ENCODE measurements at regions of chr11 and their contacts with region 1.

Region 1: GRCh38 chr11:19903620-19904069 is 191.0 kb downstream of the NAV2 start:
- DNase-seq: peak; percentile 78 to 86
- H3K4me3 ChIP-seq: no peak overlapping the region
- H3K4me3 Mint-ChIP-seq: no peak overlapping the region
- H3K27ac Mint-ChIP-seq: no peak overlapping the region
- H3K4me1 ChIP-seq: peaks cover 13% of the 10 kb centered on the region; the same call in 1 of the 2 replicates
- H3K4me1 Mint-ChIP-seq: peaks cover 10% of the 10 kb centered on the region
- H3K27me3 ChIP-seq: no peaks in the 10 kb centered on the region
- H3K27me3 Mint-ChIP-seq: no peaks in the 10 kb centered on the region
- CTCF ChIP-seq: peak; percentile 86 to 91

Region 2: GRCh38 chr11:19071255-19071654 is 832.4 kb before region 1 on chr11:
- CTCF ChIA-PET with region 1: no interaction called
- POLR2A ChIA-PET with region 1: no interaction called
- intact Hi-C with region 1: loop called (anchors 10 kb)
- DNase-seq: peak; percentile 83 to 84
- H3K4me3 ChIP-seq: no peak overlapping the region
- H3K4me3 Mint-ChIP-seq: peak overlapping the region; percentile 29
- H3K27ac Mint-ChIP-seq: no peak overlapping the region
- H3K4me1 ChIP-seq: no peaks in the 10 kb centered on the region; the same call in 1 of the 2 replicates
- H3K4me1 Mint-ChIP-seq: peaks cover 15% of the 10 kb centered on the region
- H3K27me3 ChIP-seq: no peaks in the 10 kb centered on the region
- H3K27me3 Mint-ChIP-seq: peaks cover 8% of the 10 kb centered on the region
- CTCF ChIP-seq: peak; percentile 99

Region 3: DNA sequence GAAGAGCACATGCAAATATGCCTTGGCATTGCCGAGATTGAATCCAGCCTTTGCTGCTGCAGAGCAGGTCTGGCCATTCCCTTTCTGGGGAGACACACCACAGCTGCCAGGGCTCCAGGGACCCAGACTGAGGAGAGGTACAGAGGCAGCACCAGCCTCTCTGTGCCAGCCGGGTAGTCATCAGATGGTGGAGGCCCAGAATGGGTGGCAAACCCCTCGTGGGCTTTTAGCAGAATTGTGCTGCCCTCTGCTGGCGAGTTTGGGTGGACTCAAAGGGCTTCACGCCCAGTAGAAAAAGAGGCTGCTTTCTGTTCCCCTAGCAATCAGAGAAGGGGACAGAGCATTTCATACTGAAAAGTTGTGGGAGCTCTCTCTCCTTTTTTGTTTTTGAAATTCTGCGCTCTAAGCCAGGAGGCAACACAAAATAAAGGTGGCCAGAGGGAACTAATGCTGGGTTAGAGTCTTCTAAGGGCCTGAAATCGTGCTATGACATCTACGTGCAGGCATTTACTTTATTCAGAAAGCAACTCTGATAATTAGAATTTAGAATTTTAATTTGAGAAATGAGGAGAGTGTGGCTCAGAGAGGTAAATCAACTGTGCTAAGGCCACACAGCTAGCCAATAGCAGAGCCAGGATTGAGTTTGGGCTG is 349.8 kb before region 1 on chr11:
- CTCF ChIA-PET with region 1: interaction called, 9 read pairs
- POLR2A ChIA-PET with region 1: no interaction called
- intact Hi-C with region 1: loop called (anchors 1 kb)
- DNase-seq: peak; percentile 73 to 80
- H3K4me3 ChIP-seq: no peak overlapping the region
- H3K4me3 Mint-ChIP-seq: no peak overlapping the region
- H3K27ac Mint-ChIP-seq: no peak overlapping the region
- H3K4me1 ChIP-seq: peaks cover 13% of the 10 kb centered on the region
- H3K4me1 Mint-ChIP-seq: peaks cover 8% of the 10 kb centered on the region
- H3K27me3 ChIP-seq: no peaks in the 10 kb centered on the region
- H3K27me3 Mint-ChIP-seq: no peaks in the 10 kb centered on the region
- CTCF ChIP-seq: peak; percentile 85 to 89

Region 4: DNA sequence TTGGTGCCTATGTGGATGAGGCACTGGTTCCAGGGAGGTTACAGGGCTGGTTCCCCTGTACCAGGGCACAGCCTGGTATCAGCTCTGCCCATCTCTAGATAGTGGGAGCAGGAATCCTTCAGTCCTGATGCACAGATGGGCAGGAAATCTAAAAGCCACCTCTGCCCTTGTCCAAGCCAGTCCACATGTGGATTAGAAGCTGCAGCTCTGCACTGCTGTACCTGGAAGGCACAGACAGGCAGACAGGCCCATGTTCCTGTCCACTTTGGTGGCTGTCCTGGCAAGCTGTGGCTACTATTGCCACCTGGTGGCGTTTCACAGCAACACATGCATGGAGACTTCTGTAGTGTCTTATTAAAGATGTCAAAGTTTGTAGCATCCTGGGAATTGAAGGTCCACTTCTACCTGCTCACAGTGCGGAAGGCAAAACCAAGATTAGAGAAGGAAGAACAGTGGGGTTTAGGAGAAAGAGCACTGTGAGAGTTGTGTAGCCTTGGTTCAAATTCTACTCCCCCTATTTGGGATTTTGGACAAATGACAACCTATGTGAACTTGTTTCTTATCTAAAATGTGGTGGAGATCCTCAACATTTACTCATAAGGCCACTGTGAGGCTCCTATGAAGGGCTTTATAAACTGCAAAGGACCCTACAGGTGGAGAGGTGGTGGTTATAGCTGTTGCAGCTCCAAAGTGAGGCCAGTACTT is 160.9 kb before region 1 on chr11:
- CTCF ChIA-PET with region 1: interaction called, 5 read pairs
- POLR2A ChIA-PET with region 1: no interaction called
- intact Hi-C with region 1: loop called (anchors 1 kb)
- DNase-seq: peak; percentile 82 to 84
- H3K4me3 ChIP-seq: no peak overlapping the region
- H3K4me3 Mint-ChIP-seq: no peak overlapping the region
- H3K27ac Mint-ChIP-seq: no peak overlapping the region
- H3K4me1 ChIP-seq: no peaks in the 10 kb centered on the region
- H3K4me1 Mint-ChIP-seq: no peaks in the 10 kb centered on the region
- H3K27me3 ChIP-seq: no peaks in the 10 kb centered on the region
- H3K27me3 Mint-ChIP-seq: no peaks in the 10 kb centered on the region
- CTCF ChIP-seq: peak; percentile 77 to 86

Region 5: GRCh38 chr11:19938169-19938856 is 34.7 kb after region 1 on chr11:
- CTCF ChIA-PET with region 1: interaction called, 8 read pairs
- POLR2A ChIA-PET with region 1: no interaction called
- intact Hi-C with region 1: loop called (anchors 1 kb)
- DNase-seq: peak; percentile 62 to 74
- H3K4me3 ChIP-seq: no peak overlapping the region
- H3K4me3 Mint-ChIP-seq: no peak overlapping the region
- H3K27ac Mint-ChIP-seq: no peak overlapping the region
- H3K4me1 ChIP-seq: no peaks in the 10 kb centered on the region
- H3K4me1 Mint-ChIP-seq: no peaks in the 10 kb centered on the region
- H3K27me3 ChIP-seq: no peaks in the 10 kb centered on the region
- H3K27me3 Mint-ChIP-seq: no peaks in the 10 kb centered on the region
- CTCF ChIP-seq: peak; percentile 88 to 89

Region 6: GRCh38 chr11:20110908-20111669 is 207.4 kb after region 1 on chr11:
- CTCF ChIA-PET with region 1: no interaction called
- POLR2A ChIA-PET with region 1: no interaction called
- intact Hi-C with region 1: loop called (anchors 1 kb)
- DNase-seq: peak; percentile 78 to 86
- H3K4me3 ChIP-seq: no peak overlapping the region
- H3K4me3 Mint-ChIP-seq: no peak overlapping the region
- H3K27ac Mint-ChIP-seq: no peak overlapping the region
- H3K4me1 ChIP-seq: 0 out of 2 replicates have a peak, but pooled peaks cover 3% of the 10 kb centered on the region
- H3K4me1 Mint-ChIP-seq: no peaks in the 10 kb centered on the region
- H3K27me3 ChIP-seq: no peaks in the 10 kb centered on the region
- H3K27me3 Mint-ChIP-seq: no peaks in the 10 kb centered on the region
- CTCF ChIP-seq: peak; percentile 91 to 95

Region 7: GRCh38 chr11:20337526-20338154 is 434.0 kb after region 1 on chr11:
- CTCF ChIA-PET with region 1: interaction called, 3 read pairs
- POLR2A ChIA-PET with region 1: no interaction called
- intact Hi-C with region 1: loop called (anchors 1 kb)
- DNase-seq: peak in 1 of 2 experiments; percentile 43
- H3K4me3 ChIP-seq: no peak overlapping the region
- H3K4me3 Mint-ChIP-seq: no peak overlapping the region
- H3K27ac Mint-ChIP-seq: no peak overlapping the region
- H3K4me1 ChIP-seq: no peaks in the 10 kb centered on the region
- H3K4me1 Mint-ChIP-seq: peaks cover 7% of the 10 kb centered on the region
- H3K27me3 ChIP-seq: no peaks in the 10 kb centered on the region
- H3K27me3 Mint-ChIP-seq: peaks cover 4% of the 10 kb centered on the region
- CTCF ChIP-seq: peak; percentile 63 to 70

Measured in Caco-2 (cell line).